ENCODE measurements at regions of chr11 and their contacts with region 1.

Region 1: DNA sequence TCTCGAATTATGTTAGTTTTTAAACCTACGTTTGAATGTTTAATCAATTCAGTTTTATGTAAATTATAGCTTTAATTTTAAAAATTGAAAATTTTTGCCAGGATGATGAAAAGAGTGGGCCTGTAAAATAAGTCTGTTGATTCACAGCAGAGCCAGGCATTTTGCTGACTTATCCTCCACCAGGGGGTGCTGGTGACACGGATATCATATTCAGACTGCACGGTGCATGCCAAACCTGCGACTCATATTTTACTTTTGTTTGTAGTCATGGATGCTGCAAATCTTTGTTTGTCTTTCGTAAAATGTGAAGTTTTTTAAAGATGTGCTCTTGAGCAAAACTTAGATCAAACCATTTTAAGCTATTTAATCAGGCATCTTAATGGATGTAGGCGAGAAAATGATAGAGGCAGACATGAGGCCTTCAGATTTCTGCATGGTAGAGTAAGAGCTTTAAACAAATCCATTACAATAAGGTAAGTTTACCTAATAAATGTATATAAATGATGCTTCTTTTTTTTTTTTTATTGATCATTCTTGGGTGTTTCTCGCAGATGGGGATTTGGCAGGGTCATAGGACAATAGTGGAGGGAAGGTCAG is 3.6 kb upstream of the OR8B3 start:
- DNase-seq: no peak
- ATAC-seq: peak; percentile 96
- H3K4me3 ChIP-seq: no peak overlapping the region
- H3K27ac ChIP-seq: no peak overlapping the region
- H3K4me1 ChIP-seq: no peaks in the 10 kb centered on the region
- H3K27me3 ChIP-seq: 0 out of 4 replicates have a peak, but pooled peaks cover 0 to 2% of the 10 kb centered on the region in 2 experiments
- CTCF ChIP-seq: peak; percentile 72 to 85 (median 77)
- EP300 ChIP-seq: no peak
- POLR2A ChIP-seq: no peak
- RAD21 ChIP-seq: peak; percentile 48

Region 2: GRCh38 chr11:124070915-124071635 is 331.3 kb before region 1 on chr11:
- CTCF ChIA-PET with region 1: interaction called, 12 read pairs
- POLR2A ChIA-PET with region 1: no interaction called
- RAD21 ChIA-PET with region 1: no interaction called
- SMC1A ChIA-PET with region 1: interaction called, 6 read pairs
- in situ Hi-C with region 1: no loop called
- intact Hi-C with region 1: loop called (anchors 1 kb)
- DNase-seq: peak; percentile 63
- ATAC-seq: peak; percentile 83
- H3K4me3 ChIP-seq: no peak overlapping the region
- H3K27ac ChIP-seq: peak overlapping the region; percentile 70
- H3K4me1 ChIP-seq: peaks cover 13% of the 10 kb centered on the region
- H3K27me3 ChIP-seq: peaks cover 0 to 2% of the 10 kb centered on the region in 2 experiments; a peak in 1 of 4 replicates
- CTCF ChIP-seq: peak; percentile 72 to 78 (median 75)
- EP300 ChIP-seq: peak; percentile 82 to 90; a peak in 3 of 4 replicates
- POLR2A ChIP-seq: no peak
- RAD21 ChIP-seq: peak; percentile 79

Region 3: GRCh38 chr11:124301482-124302027 is 100.9 kb before region 1 on chr11:
- CTCF ChIA-PET with region 1: no interaction called
- POLR2A ChIA-PET with region 1: no interaction called
- RAD21 ChIA-PET with region 1: no interaction called
- SMC1A ChIA-PET with region 1: no interaction called
- in situ Hi-C with region 1: no loop called
- intact Hi-C with region 1: no loop called
- DNase-seq: no peak
- ATAC-seq: no peak
- H3K4me3 ChIP-seq: no peak overlapping the region
- H3K27ac ChIP-seq: no peak overlapping the region
- H3K4me1 ChIP-seq: no peaks in the 10 kb centered on the region
- H3K27me3 ChIP-seq: peaks cover 0 to 4% of the 10 kb centered on the region in 2 experiments; a peak in 1 of 4 replicates
- CTCF ChIP-seq: no peak
- EP300 ChIP-seq: no peak
- POLR2A ChIP-seq: no peak
- RAD21 ChIP-seq: no peak

Region 4: DNA sequence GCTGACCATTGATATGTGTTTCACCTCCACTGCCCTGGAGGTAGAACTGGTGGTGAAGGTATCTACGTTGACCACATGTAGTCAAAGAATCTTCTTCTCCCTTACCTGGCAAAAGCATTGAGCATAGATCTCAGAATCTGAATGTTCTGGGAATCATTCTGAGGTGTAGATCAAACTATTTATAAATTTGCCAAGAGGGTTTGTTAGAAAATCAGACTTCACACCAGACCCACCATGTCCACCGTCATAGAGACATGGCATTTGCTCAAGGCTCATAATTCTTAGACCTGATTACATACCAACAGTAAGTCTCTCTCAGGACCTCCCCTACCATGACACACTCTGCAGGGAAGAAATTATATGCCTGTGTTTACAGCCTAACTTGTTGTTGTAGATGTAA is 18.0 kb before region 1 on chr11 and contains the start of gene OR8B2:
- CTCF ChIA-PET with region 1: no interaction called
- POLR2A ChIA-PET with region 1: no interaction called
- RAD21 ChIA-PET with region 1: no interaction called
- SMC1A ChIA-PET with region 1: no interaction called
- in situ Hi-C with region 1: no loop called
- intact Hi-C with region 1: no loop called
- DNase-seq: no peak
- ATAC-seq: no peak
- H3K4me3 ChIP-seq: no peak within 1 kb of the TSS
- H3K27ac ChIP-seq: no peak within 1 kb of the TSS
- H3K4me1 ChIP-seq: no peaks in the 10 kb centered on the region
- H3K27me3 ChIP-seq: no peaks in the 10 kb centered on the region
- CTCF ChIP-seq: no peak
- EP300 ChIP-seq: no peak
- POLR2A ChIP-seq: no peak
- RAD21 ChIP-seq: no peak
- polyA plus RNA-seq, gene OR8B2: not detected

Region 5: DNA sequence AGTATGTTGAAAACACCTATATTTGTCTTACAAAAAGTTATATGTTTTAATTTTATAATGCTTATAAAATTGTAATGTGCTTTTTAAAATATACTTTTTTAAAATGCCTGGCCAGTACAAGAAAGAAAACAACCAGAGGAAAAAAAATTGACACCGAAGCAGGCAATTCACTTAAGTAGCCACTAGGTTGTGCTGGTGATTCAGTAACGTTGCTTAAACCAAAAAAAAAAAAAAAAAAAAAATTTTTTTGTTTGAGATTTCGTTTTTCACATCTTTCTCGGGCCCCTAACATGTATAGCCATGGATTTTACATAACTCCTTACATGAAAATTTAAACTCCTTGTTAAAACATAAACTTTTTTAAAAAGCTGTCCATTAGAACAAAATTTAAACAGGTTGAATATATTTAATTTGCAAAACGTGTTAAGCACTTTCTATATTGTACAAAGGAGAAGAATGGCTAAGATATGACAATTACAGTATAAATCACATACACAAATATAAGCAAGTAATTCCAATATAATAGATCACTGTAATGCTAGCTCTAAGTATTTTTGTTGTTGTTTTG is 13.0 kb after region 1 on chr11:
- CTCF ChIA-PET with region 1: interaction called, 18 read pairs
- POLR2A ChIA-PET with region 1: no interaction called
- RAD21 ChIA-PET with region 1: no interaction called
- SMC1A ChIA-PET with region 1: no interaction called
- in situ Hi-C with region 1: no loop called
- intact Hi-C with region 1: no loop called
- DNase-seq: no peak
- ATAC-seq: no peak
- H3K4me3 ChIP-seq: no peak overlapping the region
- H3K27ac ChIP-seq: no peak overlapping the region
- H3K4me1 ChIP-seq: no peaks in the 10 kb centered on the region
- H3K27me3 ChIP-seq: no peaks in the 10 kb centered on the region
- CTCF ChIP-seq: peak; percentile 54 to 70 (median 66)
- EP300 ChIP-seq: no peak
- POLR2A ChIP-seq: no peak
- RAD21 ChIP-seq: peak; percentile 76

Region 6: GRCh38 chr11:124586238-124586860 is 183.9 kb after region 1 on chr11:
- CTCF ChIA-PET with region 1: interaction called, 13 read pairs
- POLR2A ChIA-PET with region 1: no interaction called
- RAD21 ChIA-PET with region 1: no interaction called
- SMC1A ChIA-PET with region 1: interaction called, 5 read pairs
- in situ Hi-C with region 1: no loop called
- intact Hi-C with region 1: no loop called
- DNase-seq: no peak
- ATAC-seq: peak; percentile 72
- H3K4me3 ChIP-seq: no peak overlapping the region
- H3K27ac ChIP-seq: no peak overlapping the region
- H3K4me1 ChIP-seq: no peaks in the 10 kb centered on the region
- H3K27me3 ChIP-seq: no peaks in the 10 kb centered on the region; a peak in 1 of 4 replicates
- CTCF ChIP-seq: peak; percentile 57 to 67 (median 66)
- EP300 ChIP-seq: no peak
- POLR2A ChIP-seq: no peak
- RAD21 ChIP-seq: peak; percentile 58

Region 7: GRCh38 chr11:124837491-124837856 is 435.1 kb after region 1 on chr11:
- CTCF ChIA-PET with region 1: interaction called, 5 read pairs
- POLR2A ChIA-PET with region 1: no interaction called
- RAD21 ChIA-PET with region 1: no interaction called
- SMC1A ChIA-PET with region 1: no interaction called
- in situ Hi-C with region 1: loop called (anchors 25 kb)
- intact Hi-C with region 1: no loop called
- DNase-seq: peak; percentile 2
- ATAC-seq: peak; percentile 67
- H3K4me3 ChIP-seq: no peak overlapping the region
- H3K27ac ChIP-seq: no peak overlapping the region
- H3K4me1 ChIP-seq: no peaks in the 10 kb centered on the region
- H3K27me3 ChIP-seq: peaks cover 16 to 17% of the 10 kb centered on the region in 2 experiments
- CTCF ChIP-seq: peak; percentile 41 to 60 (median 54)
- EP300 ChIP-seq: no peak
- POLR2A ChIP-seq: no peak
- RAD21 ChIP-seq: peak; percentile 46

Region 8: GRCh38 chr11:124865921-124866583 is 463.6 kb after region 1 on chr11:
- CTCF ChIA-PET with region 1: no interaction called
- POLR2A ChIA-PET with region 1: no interaction called
- RAD21 ChIA-PET with region 1: no interaction called
- SMC1A ChIA-PET with region 1: no interaction called
- in situ Hi-C with region 1: no loop called
- intact Hi-C with region 1: loop called (anchors 5 kb)
- DNase-seq: no peak
- ATAC-seq: peak; percentile 75
- H3K4me3 ChIP-seq: no peak overlapping the region
- H3K27ac ChIP-seq: no peak overlapping the region
- H3K4me1 ChIP-seq: no peaks in the 10 kb centered on the region
- H3K27me3 ChIP-seq: peaks cover 31 to 32% of the 10 kb centered on the region in 2 experiments
- CTCF ChIP-seq: peak; percentile 38 to 67 (median 46)
- EP300 ChIP-seq: no peak
- POLR2A ChIP-seq: no peak
- RAD21 ChIP-seq: 0 out of 2 replicates have a peak, but pooled peaks have one; percentile 12